ENCODE measurements at regions of chr7 and their contacts with region 1.

Region 1: DNA sequence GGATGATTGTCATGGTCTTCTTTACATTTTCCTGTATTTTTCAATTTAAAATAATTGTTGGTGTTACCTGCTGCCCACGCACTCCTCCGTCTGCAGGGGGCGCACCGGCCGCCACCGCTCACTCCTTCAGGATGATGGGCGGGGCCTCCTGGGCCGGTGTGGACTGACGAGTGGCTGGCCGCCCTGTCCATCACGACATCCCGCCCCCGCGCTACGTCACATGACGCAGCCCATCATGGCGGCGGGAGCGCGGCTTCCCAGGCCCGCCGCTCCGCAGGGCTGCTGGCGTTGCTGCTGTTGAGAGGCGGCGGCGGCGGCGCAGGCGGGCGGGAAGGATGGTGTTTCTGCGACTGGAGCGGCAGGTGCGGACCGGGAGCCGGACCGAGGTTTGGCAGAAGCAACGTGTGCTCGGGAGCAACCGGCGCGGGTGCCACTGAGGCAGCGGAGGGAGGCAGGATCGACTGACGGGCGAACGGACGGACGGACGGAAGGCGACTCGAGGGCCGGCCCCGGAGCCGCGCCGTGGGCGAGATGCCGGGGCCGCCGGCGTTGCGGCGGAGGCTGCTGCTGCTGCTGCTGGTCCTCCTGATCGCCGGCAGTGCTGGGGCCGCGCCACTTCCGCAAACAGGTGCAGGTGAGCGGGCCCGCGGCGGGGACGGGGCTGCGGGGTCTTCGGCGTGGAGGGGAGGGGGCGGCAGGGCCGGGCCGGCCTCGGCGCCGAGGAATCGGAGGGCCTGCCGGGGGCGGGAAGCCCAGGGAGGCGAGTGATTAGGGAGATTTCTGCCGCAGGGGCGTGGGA is at the start of gene LMTK2:
- DNase-seq: peak; percentile 69 to 98
- H3K4me3 ChIP-seq: peak within 1 kb of the TSS; percentile 76
- H3K27ac ChIP-seq: peak within 1 kb of the TSS; percentile 54
- H3K4me1 ChIP-seq: peaks cover 40% of the 10 kb centered on the region
- H3K27me3 ChIP-seq: no peaks in the 10 kb centered on the region
- CTCF ChIP-seq: peak; percentile 84
- total RNA-seq, gene LMTK2: 33.3 and 37.1 TPM in 2 replicates

Region 2: DNA sequence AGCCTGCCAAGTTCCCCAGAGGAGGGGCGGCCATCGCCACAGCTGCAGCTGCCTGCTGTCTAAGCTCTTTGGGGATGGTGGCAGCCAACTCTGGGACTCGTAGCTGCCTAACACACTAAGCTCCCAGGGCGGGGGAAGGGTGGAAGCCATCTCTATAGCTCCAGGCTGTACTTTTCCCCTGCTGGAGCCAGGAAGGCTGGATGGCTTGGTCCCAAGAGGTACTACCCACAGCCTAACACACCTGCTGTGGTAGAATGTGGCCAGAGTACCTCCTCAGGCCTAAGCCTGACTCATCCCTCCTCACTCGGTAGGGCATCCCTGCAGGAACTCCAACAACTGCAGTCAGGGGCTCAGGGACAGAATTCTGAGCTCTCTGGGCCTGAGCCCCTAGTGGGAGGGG is 526.6 kb before region 1 on chr7:
- CTCF ChIA-PET with region 1: no interaction called
- POLR2A ChIA-PET with region 1: interaction called, 23 read pairs
- intact Hi-C with region 1: no loop called
- DNase-seq: no peak
- H3K4me3 ChIP-seq: no peak overlapping the region
- H3K27ac ChIP-seq: no peak overlapping the region
- H3K4me1 ChIP-seq: no peaks in the 10 kb centered on the region
- H3K27me3 ChIP-seq: peaks cover 10% of the 10 kb centered on the region; the same call in 1 of the 2 replicates
- CTCF ChIP-seq: no peak

Region 3: DNA sequence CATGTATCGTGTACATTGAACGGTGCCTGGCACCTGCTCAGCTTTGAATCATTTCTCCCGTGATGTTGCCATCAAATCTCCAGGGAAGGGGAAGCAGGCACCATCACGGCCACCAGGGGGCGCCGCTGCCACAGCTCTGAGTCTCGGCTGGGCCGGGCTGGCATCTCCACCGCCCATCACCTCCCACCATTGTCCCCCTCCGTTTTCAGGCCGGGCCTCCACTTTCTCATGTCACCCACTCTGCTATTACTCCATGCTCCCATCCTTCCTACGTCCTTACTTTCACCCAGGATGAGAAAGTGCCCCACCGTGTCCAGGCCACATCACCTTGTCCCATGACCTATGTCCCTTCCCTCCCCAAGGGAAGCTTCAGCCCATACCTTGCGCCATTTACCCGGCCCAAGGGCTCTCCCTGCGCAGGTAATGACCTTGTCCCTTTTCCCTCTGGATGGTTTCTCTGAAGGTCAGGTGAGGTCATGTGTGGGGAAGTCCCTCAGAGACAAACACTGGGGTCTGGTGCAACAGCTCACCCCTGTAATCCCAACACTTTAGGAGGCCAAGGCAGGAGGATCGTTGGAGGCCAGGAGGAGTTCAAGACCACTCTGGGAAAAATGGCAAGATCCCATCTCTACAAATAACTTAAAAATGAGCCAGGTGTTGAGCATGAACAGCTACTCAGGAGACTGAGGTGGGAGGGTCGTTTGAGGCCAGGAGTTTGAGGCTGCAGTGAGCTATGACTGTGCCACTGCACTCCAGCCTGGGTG is 85.1 kb before region 1 on chr7:
- CTCF ChIA-PET with region 1: no interaction called
- POLR2A ChIA-PET with region 1: no interaction called
- intact Hi-C with region 1: loop called (anchors 1 kb)
- DNase-seq: peak; percentile 55 to 85
- H3K4me3 ChIP-seq: no peak overlapping the region
- H3K27ac ChIP-seq: no peak overlapping the region
- H3K4me1 ChIP-seq: no peaks in the 10 kb centered on the region
- H3K27me3 ChIP-seq: no peaks in the 10 kb centered on the region
- CTCF ChIP-seq: peak; percentile 94

Region 4: GRCh38 chr7:98051118-98051744 is 55.6 kb before region 1 on chr7:
- CTCF ChIA-PET with region 1: interaction called, 3 read pairs
- POLR2A ChIA-PET with region 1: no interaction called
- intact Hi-C with region 1: loop called (anchors 5 kb)
- DNase-seq: peak in 1 of 2 experiments; percentile 11
- H3K4me3 ChIP-seq: no peak overlapping the region
- H3K27ac ChIP-seq: no peak overlapping the region
- H3K4me1 ChIP-seq: peaks cover 24% of the 10 kb centered on the region
- H3K27me3 ChIP-seq: no peaks in the 10 kb centered on the region
- CTCF ChIP-seq: no peak

Region 5: DNA sequence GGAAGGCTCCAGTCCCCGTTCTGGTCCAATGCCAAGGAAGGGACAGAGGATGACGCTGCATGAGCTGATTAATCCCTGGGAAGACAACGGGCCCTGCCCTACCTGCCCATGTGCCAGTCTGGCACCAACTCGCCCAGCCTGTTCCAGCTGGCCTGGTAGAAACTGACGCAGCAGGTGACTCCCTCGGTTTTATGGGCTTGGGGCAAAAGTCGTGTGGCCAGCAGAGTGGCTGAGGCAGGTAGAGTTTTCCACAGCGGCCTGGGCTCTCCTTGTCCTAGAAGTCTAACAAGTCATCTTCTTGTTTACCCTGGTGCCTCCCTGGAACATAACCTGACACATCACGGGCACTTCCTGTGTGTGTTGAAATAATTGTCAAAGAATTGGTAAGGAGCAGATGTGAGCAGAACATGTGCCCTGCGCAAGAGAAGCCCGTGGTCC is 20.5 kb before region 1 on chr7:
- CTCF ChIA-PET with region 1: interaction called, 24 read pairs
- POLR2A ChIA-PET with region 1: no interaction called
- intact Hi-C with region 1: loop called (anchors 1 kb)
- DNase-seq: peak; percentile 95 to 98
- H3K4me3 ChIP-seq: peak overlapping the region; percentile 11; the same call in 1 of the 2 replicates
- H3K27ac ChIP-seq: peak overlapping the region; percentile 94
- H3K4me1 ChIP-seq: peaks cover 51% of the 10 kb centered on the region
- H3K27me3 ChIP-seq: no peaks in the 10 kb centered on the region
- CTCF ChIP-seq: no peak

Measured in PC-9 (cell line).